Left ventricle myocardium inferior (tissue), 1 donor: ENCODE measurements at regions of chr22 and their contacts with region 1.

Region 1: DNA sequence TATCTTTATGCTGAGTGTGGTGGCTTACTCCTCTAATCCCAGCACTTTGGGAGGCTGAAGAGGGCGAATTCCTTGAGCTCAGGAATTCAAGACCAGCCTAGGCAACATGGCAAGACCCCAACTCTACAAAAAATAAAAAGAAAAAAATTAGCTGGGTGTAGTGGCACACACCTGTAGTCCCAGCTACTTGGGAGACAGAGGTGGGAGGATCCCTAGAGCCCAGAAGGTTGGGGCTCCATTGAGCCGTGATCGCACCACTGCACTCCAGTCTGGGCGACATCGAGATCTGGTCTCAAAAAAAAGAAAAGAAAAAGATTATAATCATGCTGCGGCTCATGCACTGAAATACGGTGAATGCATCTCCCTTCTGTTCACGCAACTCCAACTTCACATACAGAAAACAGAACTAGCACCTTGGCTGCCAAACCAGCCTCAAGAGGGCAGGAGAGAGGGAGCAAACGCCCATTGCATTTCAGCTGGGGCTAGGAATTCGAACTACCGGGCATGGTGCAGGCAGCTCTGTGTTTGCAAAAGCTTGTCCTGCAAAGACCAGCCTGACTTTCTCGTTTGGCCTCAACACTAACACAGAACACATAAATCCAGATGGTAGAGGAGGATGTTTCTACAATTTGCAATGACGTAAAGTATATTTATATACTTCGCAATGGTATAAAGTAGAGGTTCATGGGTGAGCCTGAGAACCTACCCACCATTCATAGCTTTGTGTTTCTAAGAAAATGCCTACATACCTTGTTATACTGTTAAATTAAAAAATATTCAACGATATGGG is 6.3 kb upstream of the SYNGR1 start:
- DNase-seq: peak; percentile 41
- H3K4me3 ChIP-seq: no peak overlapping the region
- H3K27ac ChIP-seq: no peak overlapping the region
- H3K4me1 ChIP-seq: peaks cover 5% of the 10 kb centered on the region
- H3K27me3 ChIP-seq: peaks cover 10% of the 10 kb centered on the region
- CTCF ChIP-seq: peak; percentile 79

Region 2: DNA sequence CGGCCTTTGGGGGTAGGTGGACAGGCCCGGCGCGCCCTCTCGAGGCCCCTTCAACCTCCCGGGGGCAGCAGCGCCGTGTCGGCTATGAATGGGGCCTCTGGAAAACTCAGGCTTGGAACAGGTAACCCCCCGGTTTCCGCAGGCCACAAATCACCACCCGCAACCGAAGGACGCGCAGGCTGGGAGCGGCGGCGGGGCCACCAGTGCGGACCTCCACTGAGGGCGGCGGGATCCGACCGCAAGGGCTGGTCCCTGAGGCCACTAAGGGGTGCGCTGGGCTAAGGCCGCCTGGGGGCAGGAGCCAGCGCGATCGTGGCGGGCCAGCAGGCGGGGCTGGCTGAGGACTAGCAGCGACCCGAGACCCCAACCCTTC is 176.2 kb after region 1 on chr22:
- intact Hi-C with region 1: loop called (anchors 10 kb)
- DNase-seq: peak; percentile 62
- H3K4me3 ChIP-seq: peak overlapping the region; percentile 92
- H3K27ac ChIP-seq: peak overlapping the region; percentile 99
- H3K4me1 ChIP-seq: peaks cover 67% of the 10 kb centered on the region
- H3K27me3 ChIP-seq: no peaks in the 10 kb centered on the region
- CTCF ChIP-seq: peak; percentile 54

Region 3: DNA sequence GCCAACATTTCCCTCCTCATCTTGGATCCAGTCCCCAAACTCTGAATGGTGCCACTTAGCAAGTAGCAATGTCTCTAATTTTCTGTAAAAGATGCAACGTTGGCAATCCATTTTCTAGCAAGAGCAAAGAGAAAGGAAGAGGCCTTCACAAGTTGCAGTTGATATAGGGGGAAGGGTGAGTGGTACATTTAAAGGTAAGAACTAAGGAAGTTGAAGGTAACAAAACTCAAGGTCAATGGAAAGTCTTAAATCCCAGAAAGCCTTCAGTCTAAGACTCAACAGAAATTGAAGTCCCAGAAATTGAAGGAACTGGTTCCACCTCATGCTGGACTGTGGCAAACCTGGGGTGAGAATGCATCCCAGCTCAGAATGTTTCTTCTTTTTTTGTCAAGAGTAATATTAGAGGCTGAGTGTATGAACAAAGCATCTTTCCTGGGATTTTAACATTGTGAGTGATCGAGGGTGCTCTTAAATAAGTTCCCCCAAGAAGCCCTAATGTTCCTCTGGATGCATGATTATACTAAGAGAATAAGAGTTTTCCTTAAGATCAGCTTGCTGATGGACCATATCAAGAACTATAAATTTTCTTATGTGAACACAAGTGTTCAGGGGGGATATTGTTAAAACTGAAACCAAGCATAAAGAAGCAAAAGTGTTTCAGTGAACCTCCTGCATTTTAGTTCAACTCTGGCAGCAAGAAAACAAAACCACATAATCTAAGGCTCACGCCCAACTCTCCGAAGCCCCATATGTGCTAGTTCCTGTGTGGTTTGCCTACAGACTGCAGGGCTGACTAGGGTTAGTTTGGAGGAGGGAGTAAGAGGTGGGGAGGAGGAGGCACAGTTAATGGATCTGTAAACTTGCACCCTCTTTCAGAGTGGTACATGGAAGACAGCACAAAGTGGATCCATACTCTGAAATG is 557.1 kb after region 1 on chr22 and contains the start of gene GRAP2:
- intact Hi-C with region 1: no loop called
- DNase-seq: no peak
- H3K4me3 ChIP-seq: no peak within 1 kb of the TSS
- H3K27ac ChIP-seq: no peak within 1 kb of the TSS
- H3K4me1 ChIP-seq: peaks cover 12% of the 10 kb centered on the region
- H3K27me3 ChIP-seq: peaks cover 49% of the 10 kb centered on the region
- CTCF ChIP-seq: no peak
- total RNA-seq, gene GRAP2: 1.6 TPM